HEK293T (cell line): ENCODE measurements at regions of chr4 and their contacts with region 1.

Region 1: DNA sequence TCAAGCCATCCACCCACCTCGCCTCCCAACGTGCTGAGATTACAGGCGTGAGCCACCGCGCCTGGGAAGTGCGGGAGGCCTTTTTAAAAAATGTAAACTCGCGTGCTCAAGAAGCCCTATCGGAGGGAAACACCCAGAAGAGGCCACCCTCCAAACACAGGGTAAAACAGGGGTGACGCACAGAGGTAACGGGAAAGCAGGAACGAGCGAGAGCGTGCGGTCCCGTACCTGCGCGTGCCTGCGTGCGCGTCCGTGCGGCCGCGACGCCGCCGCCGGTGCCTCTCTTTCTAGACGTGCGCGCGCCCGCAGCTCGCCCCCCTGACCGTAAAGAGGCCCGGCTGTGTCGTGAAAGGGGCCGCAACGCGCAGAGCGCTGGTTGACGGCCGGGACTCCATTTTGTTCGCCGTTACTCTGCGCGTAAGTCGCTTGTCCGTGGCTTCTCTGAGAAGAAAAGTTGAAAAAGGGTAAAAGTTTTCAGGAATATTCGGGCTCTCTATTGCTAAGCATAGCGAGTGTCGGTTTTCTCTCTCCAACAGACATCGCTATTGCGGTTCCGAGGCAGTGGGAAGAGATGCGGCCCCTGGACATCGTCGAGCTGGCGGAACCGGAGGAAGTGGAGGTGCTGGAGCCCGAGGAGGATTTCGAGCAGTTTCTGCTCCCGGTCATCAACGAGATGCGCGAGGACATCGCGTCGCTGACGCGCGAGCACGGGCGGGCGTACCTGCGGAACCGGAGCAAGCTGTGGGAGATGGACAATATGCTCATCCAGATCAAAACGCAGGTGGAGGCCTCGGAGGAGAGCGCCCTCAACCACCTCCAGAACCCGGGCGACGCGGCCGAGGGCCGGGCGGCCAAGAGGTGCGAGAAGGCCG is at the start of gene MRFAP1:
- DNase-seq: peak; percentile 95

Region 2: DNA sequence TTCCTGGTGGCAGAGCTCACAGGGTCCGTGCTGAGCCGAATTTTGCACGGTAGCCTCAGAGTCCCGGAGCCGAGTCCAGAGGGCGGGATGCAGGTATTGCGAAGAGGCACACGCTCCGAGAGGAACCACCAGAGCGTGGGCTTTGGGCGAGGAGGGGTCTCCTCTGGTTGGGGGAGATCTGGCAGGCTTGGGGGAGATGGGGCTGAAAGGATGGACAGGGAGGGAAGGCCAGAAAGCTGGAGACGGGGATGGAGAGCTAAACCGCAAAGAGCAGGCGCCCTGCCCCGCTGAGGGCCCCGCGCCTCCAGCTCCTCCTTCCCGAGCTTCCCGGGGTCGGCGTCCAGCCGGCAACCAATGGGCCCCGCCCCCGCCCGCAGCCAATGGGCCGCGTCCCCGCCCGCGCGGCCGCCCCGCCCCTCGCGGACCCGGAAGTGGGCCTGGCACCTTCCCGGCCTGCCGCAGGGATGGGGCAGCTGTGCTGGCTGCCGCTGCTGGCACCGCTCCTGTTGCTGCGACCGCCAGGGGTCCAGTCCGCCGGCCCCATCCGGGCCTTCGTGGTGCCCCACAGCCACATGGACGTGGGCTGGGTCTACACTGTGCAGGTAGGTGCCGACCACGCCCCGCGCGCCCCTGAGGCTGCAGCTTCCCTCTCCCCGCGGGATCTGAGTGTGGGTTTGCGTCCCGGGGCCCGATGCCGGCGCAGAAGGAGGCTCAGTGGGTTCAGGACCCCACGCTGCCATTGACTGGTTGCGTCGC is 65.6 kb before region 1 on chr4 and contains the start of gene MAN2B2:
- CTCF ChIA-PET with region 1: no interaction called
- POLR2A ChIA-PET with region 1: interaction called, 14 read pairs
- DNase-seq: peak; percentile 98

Region 3: DNA sequence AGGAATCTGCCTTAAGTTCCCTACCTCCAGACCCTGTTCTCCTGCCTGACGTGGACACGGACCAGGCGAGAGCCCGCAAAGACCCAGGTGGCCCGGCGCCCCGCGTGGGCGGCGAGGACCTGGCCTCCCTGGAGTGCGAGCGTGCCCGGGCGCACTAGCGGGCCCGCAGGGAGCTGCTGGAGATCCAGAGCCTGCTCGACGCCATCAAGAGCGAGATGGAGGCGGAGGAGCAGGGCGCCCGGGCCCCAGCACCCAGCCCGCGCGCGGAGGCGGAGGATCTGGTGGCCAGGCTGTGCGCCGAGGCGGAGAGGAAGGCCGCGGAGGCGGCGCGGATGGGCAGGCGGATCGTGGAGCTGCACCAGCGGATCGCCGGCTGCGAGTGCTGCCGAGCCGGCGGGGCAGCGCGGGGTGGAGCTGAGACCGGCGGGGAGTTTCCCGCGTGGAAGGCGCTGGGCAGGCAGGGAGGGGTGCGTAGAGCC is 18.1 kb after region 1 on chr4:
- CTCF ChIA-PET with region 1: no interaction called
- POLR2A ChIA-PET with region 1: interaction called, 24 read pairs
- DNase-seq: no peak

Region 4: GRCh38 chr4:6695660-6696630 is 55.4 kb after region 1 on chr4:
- CTCF ChIA-PET with region 1: no interaction called
- POLR2A ChIA-PET with region 1: interaction called, 12 read pairs
- DNase-seq: no peak

Region 5: DNA sequence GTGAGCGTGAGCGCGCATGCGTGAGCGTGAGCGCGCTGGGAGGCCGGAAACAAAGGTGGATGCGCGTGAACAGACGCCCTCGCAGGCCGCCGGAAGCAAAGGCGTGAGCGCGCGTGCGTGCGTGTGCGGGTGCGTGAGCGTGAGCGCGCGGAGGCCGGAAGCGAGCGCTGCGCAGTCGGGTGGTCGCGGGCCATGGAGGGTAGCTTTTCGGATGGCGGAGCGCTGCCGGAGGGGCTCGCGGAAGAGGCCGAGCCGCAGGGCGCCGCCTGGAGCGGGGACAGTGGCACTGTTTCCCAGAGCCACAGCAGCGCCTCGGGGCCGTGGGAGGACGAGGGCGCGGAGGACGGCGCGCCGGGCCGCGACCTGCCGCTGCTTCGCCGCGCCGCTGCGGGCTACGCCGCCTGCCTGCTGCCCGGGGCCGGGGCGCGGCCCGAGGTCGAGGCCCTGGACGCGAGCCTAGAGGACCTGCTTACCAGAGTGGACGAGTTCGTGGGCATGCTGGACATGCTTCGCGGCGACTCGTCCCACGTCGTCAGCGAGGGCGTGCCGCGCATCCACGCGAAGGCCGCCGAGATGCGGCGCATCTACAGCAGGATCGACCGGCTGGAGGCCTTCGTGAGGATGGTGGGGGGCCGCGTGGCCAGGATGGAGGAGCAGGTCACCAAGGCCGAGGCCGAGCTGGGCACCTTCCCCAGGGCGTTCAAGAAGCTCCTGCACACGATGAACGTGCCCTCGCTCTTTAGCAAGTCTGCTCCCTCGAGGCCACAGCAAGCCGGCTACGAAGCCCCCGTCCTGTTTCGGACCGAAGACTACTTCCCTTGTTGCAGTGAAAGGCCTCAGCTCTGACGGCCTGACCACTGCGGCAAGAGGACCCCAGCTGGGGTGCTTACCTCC is 75.7 kb after region 1 on chr4 and contains the start of gene BLOC1S4:
- CTCF ChIA-PET with region 1: no interaction called
- POLR2A ChIA-PET with region 1: interaction called, 25 read pairs
- DNase-seq: peak; percentile 96